Tibial artery (tissue), 4 donors: ENCODE measurements at regions of chr15 and their contacts with region 1.

Region 1: GRCh38 chr15:43510200-43511011 is 7.0 kb upstream of the MAP1A start:
- DNase-seq: peak; percentile 98 to 99
- H3K4me3 ChIP-seq: peak overlapping the region; percentile 64 to 65
- H3K27ac ChIP-seq: peak overlapping the region; percentile 80 to 81
- H3K4me1 ChIP-seq: peaks cover 0 to 24% (median 16%) of the 10 kb centered on the region in 4 donors
- H3K27me3 ChIP-seq: no peaks in the 10 kb centered on the region
- CTCF ChIP-seq: peak; percentile 23 to 39

Region 2: GRCh38 chr15:43492673-43493601 is 17.5 kb before region 1 on chr15 and contains the start of gene TP53BP1:
- intact Hi-C with region 1: loop called (anchors 1 kb)
- DNase-seq: peak; percentile 97 to 98
- H3K4me3 ChIP-seq: peak within 1 kb of the TSS; percentile 69 to 93
- H3K27ac ChIP-seq: peak within 1 kb of the TSS; percentile 78 to 80
- H3K4me1 ChIP-seq: peaks cover 0 to 22% (median 4%) of the 10 kb centered on the region in 4 donors
- H3K27me3 ChIP-seq: no peaks in the 10 kb centered on the region
- CTCF ChIP-seq: no peak

Region 3: GRCh38 chr15:43776718-43777583 is 266.5 kb after region 1 on chr15 and contains the start of gene ELL3:
- intact Hi-C with region 1: loop called (anchors 10 kb)
- DNase-seq: peak; percentile 78 to 92
- H3K4me3 ChIP-seq: peak within 1 kb of the TSS; percentile 54 to 68
- H3K27ac ChIP-seq: peak within 1 kb of the TSS; percentile 88 to 89
- H3K4me1 ChIP-seq: peaks cover 0 to 22% (median 13%) of the 10 kb centered on the region in 4 donors
- H3K27me3 ChIP-seq: no peaks in the 10 kb centered on the region
- CTCF ChIP-seq: peak; percentile 75 to 80